IMR-90 (cell line): ENCODE measurements at regions of chr5 and their contacts with region 1.

Region 1: DNA sequence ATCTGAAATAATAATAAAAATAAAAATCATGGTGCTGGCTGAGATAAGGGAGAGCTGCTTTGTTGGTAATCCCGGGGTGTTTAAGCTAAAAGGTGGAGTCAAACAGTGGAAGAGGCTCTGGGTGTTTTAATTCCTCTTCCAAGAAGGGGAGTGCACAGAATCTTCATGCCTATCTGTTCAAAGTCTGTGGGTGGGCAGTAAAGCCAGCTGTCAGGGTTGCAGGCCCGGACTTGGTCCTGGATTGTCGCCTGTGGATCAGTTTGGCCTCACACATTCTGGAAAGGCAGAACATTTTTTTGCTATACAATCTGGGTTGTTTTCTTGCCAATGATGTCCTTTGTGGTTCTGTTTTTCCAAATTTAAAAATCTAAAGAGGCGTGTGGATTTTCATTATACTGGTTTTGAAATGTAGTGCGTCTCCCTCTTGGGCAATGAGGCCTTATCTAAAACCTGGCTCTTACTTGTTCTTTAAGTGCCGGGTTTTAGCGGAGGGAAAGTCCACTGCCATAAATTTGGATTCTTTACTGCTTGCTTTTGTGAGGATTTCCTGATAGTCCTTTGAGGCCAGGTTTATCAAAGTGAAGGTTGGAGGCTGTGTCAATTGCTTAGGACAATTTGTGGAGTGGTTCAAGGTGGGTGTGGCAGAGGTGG is 5.8 kb downstream of the ANKDD1B start:
- DNase-seq: no peak
- ATAC-seq: no peak
- H3K4me3 ChIP-seq: no peak overlapping the region
- H3K27ac ChIP-seq: no peak overlapping the region
- H3K4me1 ChIP-seq: no peaks in the 10 kb centered on the region
- H3K27me3 ChIP-seq: no peaks in the 10 kb centered on the region
- CTCF ChIP-seq: no peak
- POLR2A ChIP-seq: no peak
- RAD21 ChIP-seq: no peak

Region 2: GRCh38 chr5:75225506-75225905 is 391.6 kb before region 1 on chr5:
- CTCF ChIA-PET with region 1: no interaction called
- POLR2A ChIA-PET with region 1: no interaction called
- dilution Hi-C with region 1: no loop called
- in situ Hi-C with region 1: no loop called
- intact Hi-C with region 1: no loop called
- DNase-seq: no peak
- ATAC-seq: no peak
- H3K4me3 ChIP-seq: no peak overlapping the region
- H3K27ac ChIP-seq: no peak overlapping the region
- H3K4me1 ChIP-seq: no peaks in the 10 kb centered on the region
- H3K27me3 ChIP-seq: no peaks in the 10 kb centered on the region
- CTCF ChIP-seq: no peak
- POLR2A ChIP-seq: no peak
- RAD21 ChIP-seq: no peak

Region 3: DNA sequence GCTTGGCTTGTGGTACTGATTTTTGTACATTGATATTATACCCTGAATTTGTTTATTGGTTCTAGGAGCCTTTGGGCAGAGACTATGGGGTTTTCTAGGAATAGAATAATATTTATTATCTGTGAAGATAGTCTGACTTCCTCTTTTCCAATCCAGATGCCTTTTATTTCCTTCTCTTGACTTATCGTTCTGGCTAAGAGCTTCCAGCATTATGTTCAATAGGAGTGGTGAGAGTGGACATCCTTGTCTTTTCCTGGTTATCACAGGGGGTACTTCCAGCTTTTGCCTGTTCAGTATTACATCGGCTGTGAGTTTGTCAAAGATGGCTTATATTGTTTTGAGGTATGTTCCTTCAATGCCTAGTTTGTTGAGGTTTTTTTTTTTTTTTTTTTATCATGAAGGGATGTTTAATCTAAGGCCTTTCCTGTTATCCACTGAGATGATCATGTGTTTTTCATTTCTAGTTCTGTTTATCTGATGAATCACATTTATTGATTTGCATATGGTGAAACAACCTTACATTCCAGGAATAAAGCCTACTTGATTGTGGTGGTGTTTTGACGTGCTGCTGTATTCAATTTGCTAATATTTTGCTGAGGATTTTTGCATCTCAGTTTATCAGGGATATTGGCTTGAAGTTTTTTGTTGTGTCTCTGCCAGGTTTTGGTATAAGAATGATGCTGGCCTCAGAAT is 183.1 kb before region 1 on chr5:
- CTCF ChIA-PET with region 1: no interaction called
- POLR2A ChIA-PET with region 1: no interaction called
- dilution Hi-C with region 1: no loop called
- in situ Hi-C with region 1: no loop called
- intact Hi-C with region 1: no loop called
- DNase-seq: peak; percentile 17
- ATAC-seq: no peak
- H3K4me3 ChIP-seq: no peak overlapping the region
- H3K27ac ChIP-seq: no peak overlapping the region
- H3K4me1 ChIP-seq: no peaks in the 10 kb centered on the region; the same call in none of the 2 replicates
- H3K27me3 ChIP-seq: no peaks in the 10 kb centered on the region
- CTCF ChIP-seq: no peak
- POLR2A ChIP-seq: no peak
- RAD21 ChIP-seq: no peak

Region 4: DNA sequence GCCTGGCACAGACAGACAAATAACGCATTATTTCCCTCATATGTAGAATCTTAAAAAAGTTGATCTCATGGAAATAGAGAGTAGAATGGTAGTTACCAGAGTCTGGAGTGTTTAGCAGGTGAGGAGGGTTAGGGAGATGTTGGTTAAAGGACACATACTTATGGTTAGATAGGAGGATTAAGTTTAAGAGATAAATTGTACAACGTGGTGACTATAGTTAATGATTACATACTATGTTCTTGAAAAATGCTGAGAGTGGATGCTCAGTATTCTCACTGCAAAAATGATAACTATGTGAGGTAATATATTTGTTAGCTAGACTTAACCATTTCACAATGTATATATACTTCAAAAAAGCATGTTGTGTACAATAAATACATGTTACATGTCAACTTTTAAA is 143.6 kb before region 1 on chr5:
- CTCF ChIA-PET with region 1: no interaction called
- POLR2A ChIA-PET with region 1: no interaction called
- dilution Hi-C with region 1: no loop called
- in situ Hi-C with region 1: no loop called
- intact Hi-C with region 1: no loop called
- DNase-seq: no peak
- ATAC-seq: no peak
- H3K4me3 ChIP-seq: no peak overlapping the region
- H3K27ac ChIP-seq: no peak overlapping the region
- H3K4me1 ChIP-seq: no peaks in the 10 kb centered on the region
- H3K27me3 ChIP-seq: no peaks in the 10 kb centered on the region
- CTCF ChIP-seq: no peak
- POLR2A ChIP-seq: no peak
- RAD21 ChIP-seq: no peak

Region 5: DNA sequence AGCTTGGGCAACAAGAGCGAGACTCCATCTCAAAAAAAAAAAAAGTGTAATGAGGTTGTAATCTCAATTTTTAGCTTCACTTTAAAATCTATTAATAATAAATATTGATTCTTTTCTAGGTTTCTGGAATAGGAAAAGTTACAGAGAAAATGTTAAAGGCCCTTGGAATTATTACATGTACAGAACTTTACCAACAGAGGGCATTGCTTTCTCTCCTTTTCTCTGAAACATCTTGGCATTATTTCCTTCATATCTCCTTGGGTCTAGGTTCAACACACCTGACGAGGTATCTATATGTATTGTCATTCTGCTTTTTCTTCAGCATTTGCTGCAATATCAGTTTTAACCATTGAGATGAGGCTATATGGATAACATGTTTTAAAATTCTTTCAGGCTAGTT is 32.5 kb before region 1 on chr5:
- CTCF ChIA-PET with region 1: no interaction called
- POLR2A ChIA-PET with region 1: no interaction called
- dilution Hi-C with region 1: no loop called
- in situ Hi-C with region 1: no loop called
- intact Hi-C with region 1: loop called (anchors 1 kb)
- DNase-seq: no peak
- ATAC-seq: no peak
- H3K4me3 ChIP-seq: no peak overlapping the region
- H3K27ac ChIP-seq: no peak overlapping the region
- H3K4me1 ChIP-seq: no peaks in the 10 kb centered on the region
- H3K27me3 ChIP-seq: no peaks in the 10 kb centered on the region
- CTCF ChIP-seq: peak; percentile 28
- POLR2A ChIP-seq: no peak
- RAD21 ChIP-seq: peak; percentile 29; the same call in 1 of the 2 replicates